ENCODE measurements at regions of chr2 and their contacts with region 1.

Region 1: DNA sequence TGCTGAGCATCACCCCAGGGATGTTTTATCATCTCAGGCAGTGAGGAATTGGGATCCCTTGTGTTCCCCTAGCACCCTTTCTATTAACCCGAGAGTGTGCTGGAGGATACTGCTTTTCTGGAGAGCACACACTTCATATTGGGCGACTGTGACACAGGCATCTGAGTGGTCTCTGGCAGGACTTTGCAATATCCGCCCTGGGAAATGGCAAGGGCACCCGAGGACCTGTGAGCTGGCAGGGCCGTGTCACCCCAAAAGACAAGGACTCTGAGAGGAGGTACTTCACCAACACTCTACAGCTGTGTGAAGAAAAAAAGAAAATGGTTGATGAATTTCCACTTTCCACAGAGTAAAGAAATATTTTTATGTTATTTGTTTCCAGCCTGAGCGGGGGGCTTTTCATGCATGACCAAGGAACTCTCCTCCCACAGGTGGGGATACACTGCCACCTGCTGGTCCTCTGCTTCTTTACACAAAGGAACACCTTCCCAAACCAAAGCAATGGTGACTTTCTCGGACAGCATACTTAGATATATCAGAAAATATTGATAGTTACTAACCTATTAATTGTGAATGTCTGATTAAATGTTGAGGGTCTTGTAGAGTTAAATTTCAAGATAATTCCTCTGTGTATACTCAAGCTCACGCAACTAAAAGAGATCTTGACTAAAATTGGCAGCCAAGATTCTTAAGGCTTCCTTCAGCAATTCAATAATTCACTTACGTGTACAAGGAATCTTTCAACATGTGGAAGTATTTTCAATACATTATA is 45.9 kb upstream of the REG3G start:
- DNase-seq: peak; percentile 40
- CTCF ChIP-seq: peak; percentile 71

Region 2: DNA sequence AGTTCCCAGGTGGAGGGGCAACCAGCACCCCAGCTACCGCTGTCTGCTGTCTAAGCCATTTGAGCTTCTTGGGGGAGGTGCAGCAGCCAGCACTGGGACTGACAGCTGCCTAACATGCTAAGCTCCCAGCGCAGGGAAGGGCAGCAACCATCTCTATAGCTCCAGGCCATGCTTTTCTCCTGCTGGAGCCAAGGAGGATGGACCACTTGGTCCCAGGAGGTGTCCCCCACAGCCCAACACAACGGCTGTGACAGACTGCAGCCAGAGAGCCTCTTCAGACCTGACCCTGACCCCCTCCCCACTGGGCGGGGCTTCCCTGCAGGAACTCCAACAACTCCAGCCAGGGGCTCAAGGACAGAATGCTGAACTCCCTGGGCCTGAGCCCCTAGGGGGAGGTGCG is 324.6 kb before region 1 on chr2:
- in situ Hi-C with region 1: loop called (anchors 25 kb)
- DNase-seq: no peak
- CTCF ChIP-seq: no peak

Region 3: DNA sequence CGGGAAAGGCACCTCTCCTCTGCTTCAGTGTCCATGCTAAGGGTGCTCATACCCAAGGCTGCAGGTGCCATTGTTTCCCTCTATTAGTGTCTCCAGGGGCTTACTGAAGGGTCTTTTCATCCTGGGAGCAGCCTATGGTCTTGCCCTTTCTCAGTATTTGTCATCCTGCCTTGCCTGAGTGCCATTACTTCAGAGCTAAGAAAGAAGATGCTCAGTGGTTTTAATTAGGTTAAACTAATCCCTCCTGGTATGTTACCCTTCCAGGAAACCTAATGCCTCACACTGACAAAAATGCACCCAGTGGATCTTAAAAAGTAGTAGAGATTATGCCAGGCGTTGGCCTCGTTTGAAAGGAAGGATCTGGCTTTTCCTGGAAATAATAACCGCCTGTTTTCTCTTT is 1173.6 kb after region 1 on chr2:
- in situ Hi-C with region 1: no loop called
- DNase-seq: no peak
- CTCF ChIP-seq: no peak